A673 (cell line): ENCODE measurements at regions of chr3 and their contacts with region 1.

Region 1: GRCh38 chr3:31531992-31532586 is 636 bp upstream of the STT3B start:
- DNase-seq: peak; percentile 99
- H3K4me3 ChIP-seq: peak overlapping the region; percentile 89
- H3K27ac ChIP-seq: peak overlapping the region; percentile 97
- H3K4me1 ChIP-seq: peaks cover 3% of the 10 kb centered on the region
- H3K27me3 ChIP-seq: no peaks in the 10 kb centered on the region
- CTCF ChIP-seq: no peak

Region 2: DNA sequence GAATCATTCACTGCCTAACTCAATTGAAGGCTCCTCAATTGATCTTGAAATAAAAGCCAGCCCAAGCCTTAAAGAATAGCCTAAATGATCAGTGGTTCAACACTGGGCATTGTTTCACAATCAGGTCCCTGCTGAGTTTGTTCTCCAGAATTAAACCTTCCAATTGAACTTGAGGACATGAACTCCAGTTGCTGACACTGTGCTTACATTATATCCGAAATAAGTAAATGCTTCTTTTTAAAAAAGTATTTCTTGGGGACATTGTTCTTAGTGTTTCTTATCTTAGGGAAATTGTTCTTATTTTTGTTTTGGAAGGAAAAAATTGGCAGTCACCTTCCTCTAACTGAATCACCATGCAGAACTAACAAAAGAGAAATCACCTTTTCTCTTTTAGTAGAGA is 1801.0 kb before region 1 on chr3:
- CTCF ChIA-PET with region 1: no interaction called
- POLR2A ChIA-PET with region 1: interaction called, 13 read pairs
- intact Hi-C with region 1: no loop called
- DNase-seq: no peak
- H3K4me3 ChIP-seq: no peak overlapping the region
- H3K27ac ChIP-seq: no peak overlapping the region
- H3K4me1 ChIP-seq: no peaks in the 10 kb centered on the region
- H3K27me3 ChIP-seq: no peaks in the 10 kb centered on the region
- CTCF ChIP-seq: no peak

Region 3: GRCh38 chr3:30693470-30694120 is 838.5 kb before region 1 on chr3:
- CTCF ChIA-PET with region 1: no interaction called
- POLR2A ChIA-PET with region 1: no interaction called
- intact Hi-C with region 1: no loop called
- DNase-seq: peak; percentile 89
- H3K4me3 ChIP-seq: no peak overlapping the region
- H3K27ac ChIP-seq: no peak overlapping the region
- H3K4me1 ChIP-seq: peaks cover 67% of the 10 kb centered on the region
- H3K27me3 ChIP-seq: no peaks in the 10 kb centered on the region
- CTCF ChIP-seq: peak; percentile 88

Region 4: DNA sequence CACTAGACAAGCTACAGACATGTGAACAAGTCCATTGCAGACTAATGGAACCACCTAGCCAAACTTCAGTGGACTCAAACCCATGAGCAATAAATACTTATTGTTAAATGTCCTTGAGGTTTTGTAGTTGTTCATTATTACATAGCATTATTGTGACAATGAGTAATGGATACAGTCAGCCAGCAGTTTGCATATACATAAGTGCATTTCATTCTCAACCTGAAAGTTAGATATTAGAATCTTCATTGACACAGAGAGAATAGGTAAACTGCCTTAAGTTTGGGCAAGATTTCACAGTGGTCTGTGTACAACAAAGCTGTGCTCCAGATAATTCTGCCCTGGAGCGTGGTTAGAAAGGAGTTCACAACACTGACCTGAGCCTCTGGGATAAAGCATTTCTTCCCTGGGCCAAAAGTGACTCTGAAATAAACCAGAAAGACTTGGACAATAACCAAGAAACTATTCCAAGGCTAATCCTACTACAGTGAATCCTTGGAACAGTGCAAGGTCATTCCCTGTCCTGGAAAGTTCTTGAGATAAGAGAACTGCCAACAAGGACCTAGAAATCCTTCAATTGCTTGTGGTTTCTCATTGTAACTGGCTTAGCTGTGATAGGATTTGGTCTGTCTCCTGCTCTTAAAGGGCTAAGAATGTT is 224.8 kb before region 1 on chr3:
- CTCF ChIA-PET with region 1: no interaction called
- POLR2A ChIA-PET with region 1: no interaction called
- intact Hi-C with region 1: no loop called
- DNase-seq: no peak
- H3K4me3 ChIP-seq: no peak overlapping the region
- H3K27ac ChIP-seq: no peak overlapping the region
- H3K4me1 ChIP-seq: peaks cover 13% of the 10 kb centered on the region
- H3K27me3 ChIP-seq: no peaks in the 10 kb centered on the region
- CTCF ChIP-seq: no peak

Region 5: DNA sequence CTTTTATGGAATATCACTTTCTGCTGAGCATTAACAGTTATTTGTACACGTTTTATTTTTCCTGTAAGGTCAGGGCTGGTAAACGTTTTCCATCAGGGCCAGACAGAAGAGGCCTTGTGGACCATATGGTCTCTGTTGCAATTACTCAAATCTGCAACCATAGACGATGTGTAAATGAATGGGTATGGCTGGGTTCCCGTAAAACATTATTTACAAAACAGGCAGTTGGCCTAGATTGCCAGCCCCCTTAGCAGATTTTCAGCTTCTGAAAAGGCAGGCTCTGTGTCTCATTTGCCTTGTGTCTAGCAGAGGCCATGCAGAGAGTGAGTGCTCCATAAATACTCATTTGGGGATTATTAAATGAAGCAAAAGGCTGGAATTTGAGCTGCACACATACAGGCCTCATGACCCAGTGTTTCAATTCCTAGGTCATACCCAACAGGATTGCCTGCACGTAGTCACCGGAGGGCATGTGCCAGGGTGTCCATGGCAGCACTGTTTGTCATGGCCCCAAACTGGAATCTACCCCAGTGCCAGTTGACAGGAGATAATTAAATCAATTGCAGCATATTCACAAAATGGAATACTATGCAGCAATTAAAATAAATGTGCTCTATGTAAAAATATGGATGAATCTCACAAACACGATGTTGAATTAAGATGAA is 625.6 kb after region 1 on chr3:
- CTCF ChIA-PET with region 1: no interaction called
- POLR2A ChIA-PET with region 1: no interaction called
- intact Hi-C with region 1: loop called (anchors 5 kb)
- DNase-seq: no peak
- H3K4me3 ChIP-seq: no peak overlapping the region
- H3K27ac ChIP-seq: no peak overlapping the region
- H3K4me1 ChIP-seq: peaks cover 20% of the 10 kb centered on the region
- H3K27me3 ChIP-seq: no peaks in the 10 kb centered on the region
- CTCF ChIP-seq: no peak